ENCODE measurements at regions of chr10 and their contacts with region 1.

Region 1: GRCh38 chr10:86376852-86377796 is 10.5 kb upstream of the GRID1 start:
- DNase-seq: peak; percentile 74
- H3K4me3 ChIP-seq: peak overlapping the region; percentile 50
- H3K27ac ChIP-seq: no peak overlapping the region
- H3K4me1 ChIP-seq: peaks cover 5% of the 10 kb centered on the region
- H3K27me3 ChIP-seq: peaks cover 86% of the 10 kb centered on the region
- CTCF ChIP-seq: peak; percentile 100

Region 2: DNA sequence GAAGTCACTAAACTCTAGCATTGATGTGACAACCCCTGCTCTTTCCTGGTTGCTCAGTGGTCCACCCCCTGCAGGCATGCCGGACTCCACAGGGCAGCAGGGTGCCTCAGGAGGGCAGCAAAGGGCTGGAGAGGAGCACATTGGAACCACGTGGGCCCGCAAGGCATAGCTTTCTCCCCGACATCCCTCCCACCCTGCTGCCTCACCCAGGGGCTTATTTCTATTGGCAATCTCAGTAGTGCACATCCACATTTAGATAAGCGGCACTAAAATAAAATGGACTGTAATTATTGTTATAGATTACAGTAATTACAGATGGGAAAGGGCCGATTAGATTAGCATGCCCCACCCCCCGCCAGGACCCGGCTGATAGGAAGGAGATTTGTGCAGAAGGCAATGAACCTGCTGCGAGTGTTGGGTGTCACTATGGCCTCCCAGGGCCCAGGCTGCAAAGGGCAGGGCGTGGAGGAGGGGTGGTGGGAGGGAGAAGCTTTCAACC is 590.7 kb before region 1 on chr10:
- intact Hi-C with region 1: loop called (anchors 10 kb)
- DNase-seq: no peak
- H3K4me3 ChIP-seq: no peak overlapping the region
- H3K27ac ChIP-seq: no peak overlapping the region
- H3K4me1 ChIP-seq: no peaks in the 10 kb centered on the region
- H3K27me3 ChIP-seq: no peaks in the 10 kb centered on the region
- CTCF ChIP-seq: peak; percentile 64

Measured in left ventricle myocardium inferior (tissue), 1 donor.